Activated CD8-positive, alpha-beta T cell treated with anti-CD3 and anti-CD28 coated beads, Interleukin-2, amount 10 ng/mL, durations not matched to agents 7 days and 5 days (primary cell): ENCODE measurements at regions of chr1 and their contacts with region 1.

Region 1: GRCh38 chr1:186738926-186739325 is 58.7 kb upstream of the PTGS2 start:
- DNase-seq: no peak
- ATAC-seq: peak; percentile 47
- H3K4me3 Mint-ChIP-seq: no peak overlapping the region
- H3K27ac Mint-ChIP-seq: no peak overlapping the region
- H3K4me1 Mint-ChIP-seq: peaks cover 12% of the 10 kb centered on the region
- H3K27me3 Mint-ChIP-seq: no peaks in the 10 kb centered on the region

Region 2: GRCh38 chr1:186643600-186643999 is 95.3 kb before region 1 on chr1:
- CTCF ChIA-PET with region 1: no interaction called
- POLR2A ChIA-PET with region 1: no interaction called
- DNase-seq: no peak
- ATAC-seq: no peak
- H3K4me3 Mint-ChIP-seq: no peak overlapping the region
- H3K27ac Mint-ChIP-seq: no peak overlapping the region
- H3K4me1 Mint-ChIP-seq: no peaks in the 10 kb centered on the region
- H3K27me3 Mint-ChIP-seq: no peaks in the 10 kb centered on the region

Region 3: DNA sequence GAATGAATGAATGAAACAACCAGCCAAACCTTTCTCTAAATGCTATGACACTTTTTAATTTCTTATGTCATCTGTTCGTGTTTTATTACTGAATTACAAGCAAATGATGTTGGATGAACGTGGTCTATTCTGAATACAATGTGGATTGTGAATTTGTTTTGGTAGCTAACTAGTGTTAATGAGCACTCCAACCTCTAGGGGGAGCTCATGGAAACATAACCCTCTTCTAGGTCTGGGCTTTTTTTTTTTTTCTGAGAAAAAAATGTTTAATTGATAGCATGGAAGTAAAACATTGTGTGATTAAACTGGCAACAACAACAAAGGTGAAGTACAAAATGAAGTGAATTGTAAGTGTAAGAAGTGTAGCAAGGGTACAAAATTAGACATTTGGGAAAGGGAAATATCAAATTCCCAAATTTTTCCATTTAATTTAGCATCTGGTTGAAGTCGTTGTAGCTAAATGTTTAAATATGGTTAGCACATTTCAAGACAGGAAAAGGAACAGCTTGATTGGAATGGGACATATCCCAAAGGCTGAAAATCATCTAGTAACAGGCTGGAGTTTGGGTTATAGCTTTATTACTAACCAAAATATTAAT is 16.1 kb before region 1 on chr1:
- CTCF ChIA-PET with region 1: interaction called, 12 read pairs
- POLR2A ChIA-PET with region 1: no interaction called
- DNase-seq: peak; percentile 27
- ATAC-seq: no peak
- H3K4me3 Mint-ChIP-seq: no peak overlapping the region
- H3K27ac Mint-ChIP-seq: no peak overlapping the region
- H3K4me1 Mint-ChIP-seq: no peaks in the 10 kb centered on the region
- H3K27me3 Mint-ChIP-seq: no peaks in the 10 kb centered on the region